ENCODE measurements at regions of chr2 and their contacts with region 1.

Region 1: DNA sequence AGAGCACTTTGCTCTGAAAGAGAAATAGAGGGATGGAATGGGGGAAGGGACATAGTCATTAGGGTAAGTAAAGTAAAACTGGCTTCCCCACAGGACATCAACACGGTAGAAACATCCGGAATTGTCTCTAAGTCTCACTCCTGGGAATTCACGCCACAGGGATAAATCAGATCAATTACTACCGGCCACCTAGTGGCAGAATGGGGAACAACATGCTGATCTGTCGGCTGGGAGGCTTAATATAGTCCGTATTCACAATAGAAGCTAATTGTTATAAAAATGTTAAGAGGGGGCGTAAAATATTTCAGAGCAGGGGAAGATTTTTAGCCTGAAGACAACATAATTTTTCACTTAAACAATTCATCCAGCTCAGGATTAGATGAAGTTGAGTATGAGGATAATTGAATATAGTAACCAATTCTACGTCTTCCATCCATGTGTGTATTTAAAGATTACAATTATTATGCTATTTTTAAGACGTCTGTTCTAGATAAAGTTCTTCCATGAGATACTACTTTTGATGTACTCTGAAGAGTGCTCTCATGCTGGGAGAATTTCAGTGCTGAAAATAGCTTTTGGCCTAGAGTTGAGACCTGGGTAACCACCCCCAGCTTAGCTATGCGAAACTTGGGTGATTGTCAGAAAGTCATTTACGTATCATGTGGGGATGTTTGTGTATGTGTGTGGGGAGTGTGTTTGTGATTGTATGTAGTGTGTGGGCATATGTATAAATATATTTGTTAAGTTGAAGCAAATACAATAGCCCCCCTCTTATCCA is 65.7 kb downstream of the LRRTM1 start:
- DNase-seq: peak; percentile 39 to 63
- H3K4me3 ChIP-seq: no peak overlapping the region
- H3K4me3 Mint-ChIP-seq: no peak overlapping the region
- H3K27ac Mint-ChIP-seq: no peak overlapping the region
- H3K4me1 ChIP-seq: no peaks in the 10 kb centered on the region
- H3K4me1 Mint-ChIP-seq: no peaks in the 10 kb centered on the region
- H3K27me3 ChIP-seq: no peaks in the 10 kb centered on the region
- H3K27me3 Mint-ChIP-seq: no peaks in the 10 kb centered on the region
- CTCF ChIP-seq: peak; percentile 65 to 83

Region 2: DNA sequence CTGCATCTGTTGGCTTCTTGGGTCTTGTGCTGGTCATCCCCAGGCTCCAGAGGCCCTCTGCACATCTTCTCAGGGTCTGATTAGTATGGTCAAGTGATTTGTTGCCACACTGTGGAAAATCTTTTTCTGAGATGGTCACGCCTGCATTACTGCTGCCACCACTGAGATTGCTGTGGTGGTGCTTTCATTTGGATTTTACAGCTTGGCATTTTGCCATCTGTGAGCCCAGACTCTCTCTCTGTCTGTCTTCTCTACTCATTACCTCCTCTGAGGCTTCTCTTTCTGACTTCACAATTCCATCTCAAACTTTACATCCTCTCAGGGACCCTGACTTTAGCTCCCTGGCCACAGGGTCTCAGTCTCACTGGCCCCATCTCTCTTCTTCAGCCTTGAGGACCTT is 88.9 kb before region 1 on chr2:
- CTCF ChIA-PET with region 1: interaction called, 4 read pairs
- POLR2A ChIA-PET with region 1: no interaction called
- intact Hi-C with region 1: loop called (anchors 1 kb)
- DNase-seq: no peak
- H3K4me3 ChIP-seq: no peak overlapping the region
- H3K4me3 Mint-ChIP-seq: no peak overlapping the region
- H3K27ac Mint-ChIP-seq: no peak overlapping the region
- H3K4me1 ChIP-seq: peaks cover 5% of the 10 kb centered on the region; the same call in 1 of the 2 replicates
- H3K4me1 Mint-ChIP-seq: peaks cover 2% of the 10 kb centered on the region
- H3K27me3 ChIP-seq: no peaks in the 10 kb centered on the region
- H3K27me3 Mint-ChIP-seq: no peaks in the 10 kb centered on the region
- CTCF ChIP-seq: no peak

Region 3: DNA sequence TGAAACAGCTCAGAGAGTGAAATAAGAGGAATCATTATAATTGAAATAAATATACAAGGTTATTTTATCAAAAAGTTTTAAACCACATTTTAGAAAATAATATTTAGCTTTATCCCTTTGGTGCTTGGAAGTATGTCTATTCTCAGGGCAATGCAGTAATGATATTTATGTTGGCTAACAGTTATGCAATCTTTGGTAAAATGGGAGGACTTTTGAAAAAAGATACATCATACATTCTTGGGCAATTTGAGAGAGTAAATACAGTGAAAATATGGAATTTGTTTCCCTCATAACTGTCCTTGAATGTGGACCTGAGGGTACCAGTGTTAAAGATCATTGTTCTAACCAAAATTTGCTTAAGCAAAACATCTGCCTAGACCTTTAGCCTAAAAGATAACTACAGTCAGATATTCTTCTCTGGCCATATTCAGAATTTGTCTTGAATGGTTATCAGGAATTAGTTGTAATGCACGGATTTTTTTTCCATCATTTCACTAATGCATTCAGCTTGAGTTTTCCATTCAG is 71.5 kb before region 1 on chr2:
- CTCF ChIA-PET with region 1: no interaction called
- POLR2A ChIA-PET with region 1: no interaction called
- intact Hi-C with region 1: loop called (anchors 1 kb)
- DNase-seq: no peak
- H3K4me3 ChIP-seq: no peak overlapping the region
- H3K4me3 Mint-ChIP-seq: no peak overlapping the region
- H3K27ac Mint-ChIP-seq: no peak overlapping the region
- H3K4me1 ChIP-seq: peaks cover 10% of the 10 kb centered on the region; the same call in 1 of the 2 replicates
- H3K4me1 Mint-ChIP-seq: no peaks in the 10 kb centered on the region
- H3K27me3 ChIP-seq: no peaks in the 10 kb centered on the region
- H3K27me3 Mint-ChIP-seq: no peaks in the 10 kb centered on the region
- CTCF ChIP-seq: no peak

Region 4: GRCh38 chr2:80199504-80199903 is 39.4 kb before region 1 on chr2:
- CTCF ChIA-PET with region 1: no interaction called
- POLR2A ChIA-PET with region 1: no interaction called
- intact Hi-C with region 1: loop called (anchors 1 kb)
- DNase-seq: peak; percentile 76 to 78
- H3K4me3 ChIP-seq: no peak overlapping the region
- H3K4me3 Mint-ChIP-seq: peak overlapping the region; percentile 9
- H3K27ac Mint-ChIP-seq: peak overlapping the region; percentile 82
- H3K4me1 ChIP-seq: peaks cover 32% of the 10 kb centered on the region
- H3K4me1 Mint-ChIP-seq: peaks cover 31% of the 10 kb centered on the region
- H3K27me3 ChIP-seq: no peaks in the 10 kb centered on the region
- H3K27me3 Mint-ChIP-seq: no peaks in the 10 kb centered on the region
- CTCF ChIP-seq: no peak

Region 5: GRCh38 chr2:80217446-80217845 is 21.4 kb before region 1 on chr2:
- CTCF ChIA-PET with region 1: no interaction called
- POLR2A ChIA-PET with region 1: no interaction called
- intact Hi-C with region 1: no loop called
- DNase-seq: no peak
- H3K4me3 ChIP-seq: no peak overlapping the region
- H3K4me3 Mint-ChIP-seq: no peak overlapping the region
- H3K27ac Mint-ChIP-seq: no peak overlapping the region
- H3K4me1 ChIP-seq: no peaks in the 10 kb centered on the region
- H3K4me1 Mint-ChIP-seq: no peaks in the 10 kb centered on the region
- H3K27me3 ChIP-seq: no peaks in the 10 kb centered on the region
- H3K27me3 Mint-ChIP-seq: no peaks in the 10 kb centered on the region
- CTCF ChIP-seq: no peak

Region 6: DNA sequence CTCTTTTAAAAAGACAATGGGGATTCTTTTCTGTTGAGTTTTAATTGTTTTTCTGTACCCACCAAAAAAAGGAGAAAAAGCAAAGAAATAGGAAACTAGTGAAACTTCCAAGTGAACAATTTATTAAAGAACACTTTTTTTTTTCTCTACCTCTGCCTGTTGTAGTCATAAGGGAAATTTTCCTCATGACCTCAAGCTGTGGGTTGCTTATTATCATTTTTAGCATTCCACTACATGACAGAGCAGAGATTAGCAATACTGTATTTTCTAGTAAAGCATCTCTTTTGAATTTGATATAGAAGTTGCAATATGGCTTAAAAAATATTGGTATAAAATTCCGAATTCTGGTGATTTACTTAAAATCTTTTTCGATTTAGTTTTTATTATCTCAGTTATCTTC is 153.6 kb after region 1 on chr2:
- CTCF ChIA-PET with region 1: no interaction called
- POLR2A ChIA-PET with region 1: no interaction called
- intact Hi-C with region 1: no loop called
- DNase-seq: no peak
- H3K4me3 ChIP-seq: no peak overlapping the region
- H3K4me3 Mint-ChIP-seq: no peak overlapping the region
- H3K27ac Mint-ChIP-seq: no peak overlapping the region
- H3K4me1 ChIP-seq: no peaks in the 10 kb centered on the region
- H3K4me1 Mint-ChIP-seq: no peaks in the 10 kb centered on the region
- H3K27me3 ChIP-seq: no peaks in the 10 kb centered on the region; the same call in 1 of the 2 replicates
- H3K27me3 Mint-ChIP-seq: peaks cover 13% of the 10 kb centered on the region
- CTCF ChIP-seq: no peak